ENCODE measurements at regions of chr22 and their contacts with region 1.

Region 1: DNA sequence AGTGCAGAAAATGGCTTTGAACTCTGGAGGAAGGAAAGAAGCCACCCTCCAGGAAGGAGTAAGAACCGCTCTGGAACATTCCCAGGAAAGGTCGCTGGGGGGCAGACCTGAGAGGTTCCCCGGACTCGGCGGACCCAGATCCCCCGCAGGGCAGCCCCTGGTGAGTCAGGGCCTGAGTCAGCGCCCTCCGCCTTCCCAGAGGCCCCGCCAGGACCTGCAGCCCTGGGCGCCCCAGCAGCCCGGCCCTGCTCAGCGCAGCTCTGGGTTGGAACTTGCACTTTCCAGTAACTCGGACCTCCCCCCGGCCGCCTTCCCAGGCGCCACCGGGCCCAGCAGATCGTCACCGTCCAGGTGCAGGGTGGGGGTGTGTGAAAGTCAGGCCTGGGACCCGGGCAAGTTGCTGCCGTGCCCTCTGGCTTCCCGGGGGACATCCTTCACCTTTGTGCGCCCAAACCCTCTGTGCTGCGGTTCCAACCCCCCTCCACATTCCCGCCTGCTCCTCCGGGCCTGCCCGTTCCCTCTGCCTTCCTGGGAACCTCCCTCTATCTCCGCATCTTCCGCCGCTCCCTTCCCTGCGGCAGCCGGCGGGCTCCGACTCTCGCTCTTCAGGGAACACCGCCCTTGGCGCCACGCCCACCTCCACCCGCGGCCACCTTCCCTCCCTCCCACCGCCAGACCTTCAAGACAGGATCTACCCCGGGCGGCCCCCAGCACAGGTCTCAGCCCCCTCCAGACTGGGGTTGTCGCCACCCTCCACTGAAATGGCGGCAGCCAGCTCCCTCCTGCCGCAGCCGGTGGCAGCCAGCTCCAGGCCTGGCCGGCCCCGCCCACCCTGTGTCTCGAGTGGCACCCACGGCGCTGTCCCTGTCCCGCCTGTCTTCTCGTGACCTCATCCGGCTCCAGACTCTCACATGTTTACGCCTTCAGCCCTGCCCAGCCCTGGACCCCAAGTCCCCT is 36.8 kb upstream of the WNT7B start:
- DNase-seq: peak; percentile 96
- H3K4me3 ChIP-seq: peak overlapping the region; percentile 64 to 76
- H3K27ac ChIP-seq: peak overlapping the region; percentile 98 to 99
- H3K4me1 ChIP-seq: peaks cover 23 to 47% of the 10 kb centered on the region in 2 experiments
- H3K27me3 ChIP-seq: no peaks in the 10 kb centered on the region
- CTCF ChIP-seq: peak; percentile 72
- EP300 ChIP-seq: peak in 1 of 2 experiments; percentile 87; a peak in 2 of 4 replicates
- RAD21 ChIP-seq: peak; percentile 70

Region 2: GRCh38 chr22:45977003-45977411 is 36.7 kb before region 1 on chr22 and contains the start of gene WNT7B:
- CTCF ChIA-PET with region 1: no interaction called
- POLR2A ChIA-PET with region 1: no interaction called
- DNase-seq: peak; percentile 53
- H3K4me3 ChIP-seq: peak within 1 kb of the TSS; percentile 10 to 43; a peak in 3 of 4 replicates
- H3K27ac ChIP-seq: no peak within 1 kb of the TSS
- H3K4me1 ChIP-seq: peaks cover 0 to 4% of the 10 kb centered on the region in 2 experiments; a peak in 1 of 4 replicates
- H3K27me3 ChIP-seq: peaks cover 51% of the 10 kb centered on the region
- CTCF ChIP-seq: no peak
- EP300 ChIP-seq: no peak
- RAD21 ChIP-seq: no peak
- polyA plus RNA-seq, gene WNT7B: 0.13 TPM in 1 of 2 replicates, not detected in the other

Region 3: GRCh38 chr22:46027192-46028105 is 13.7 kb after region 1 on chr22:
- CTCF ChIA-PET with region 1: interaction called, 11 read pairs
- POLR2A ChIA-PET with region 1: interaction called, 4 read pairs
- DNase-seq: no peak
- H3K4me3 ChIP-seq: no peak overlapping the region
- H3K27ac ChIP-seq: no peak overlapping the region
- H3K4me1 ChIP-seq: no peaks in the 10 kb centered on the region
- H3K27me3 ChIP-seq: no peaks in the 10 kb centered on the region
- CTCF ChIP-seq: no peak
- EP300 ChIP-seq: no peak
- RAD21 ChIP-seq: no peak

Region 4: DNA sequence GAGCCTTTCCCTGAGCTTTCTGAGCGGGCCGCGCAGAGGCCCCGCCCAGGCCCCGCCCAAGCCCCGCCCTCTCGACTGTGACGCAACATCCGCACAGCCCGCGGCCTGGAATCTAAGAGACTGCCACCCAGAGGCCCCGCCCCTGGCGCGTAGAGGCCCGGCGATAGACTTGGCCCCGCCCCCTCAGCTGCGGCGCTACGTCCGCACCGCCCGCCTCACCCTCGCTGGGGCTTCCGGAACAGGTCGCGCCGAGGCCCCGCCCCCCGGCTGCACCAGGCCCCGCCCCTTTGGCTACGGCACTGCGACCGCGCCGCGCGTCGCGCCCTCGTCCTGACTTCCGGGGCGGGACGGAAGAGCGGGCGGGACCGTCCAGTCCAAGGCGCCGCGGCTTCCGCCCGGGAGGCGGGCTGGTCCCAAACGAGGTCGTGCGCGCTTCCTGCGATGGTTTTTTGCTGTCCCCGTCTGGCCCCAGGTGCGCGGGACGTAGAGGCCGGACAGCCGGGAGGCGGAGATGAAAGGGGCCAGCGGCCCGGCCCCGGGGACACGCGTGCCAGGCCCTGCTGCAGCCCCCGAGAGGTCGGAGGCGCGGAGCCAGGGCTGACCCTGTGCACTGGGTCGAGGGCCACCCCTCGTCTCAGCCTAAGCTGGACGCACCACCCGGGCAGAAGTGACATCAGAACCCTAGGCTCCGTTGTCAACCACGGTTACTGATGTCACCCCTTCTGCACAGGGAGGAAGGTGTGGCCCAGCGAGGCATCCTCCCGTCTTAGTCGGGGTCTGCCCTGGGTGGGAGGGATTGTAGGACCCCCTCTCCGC is 22.2 kb after region 1 on chr22:
- CTCF ChIA-PET with region 1: interaction called, 73 read pairs
- POLR2A ChIA-PET with region 1: interaction called, 35 read pairs
- DNase-seq: peak; percentile 100
- H3K4me3 ChIP-seq: peak overlapping the region; percentile 88 to 91
- H3K27ac ChIP-seq: peak overlapping the region; percentile 89 to 95
- H3K4me1 ChIP-seq: peaks cover 0 to 35% of the 10 kb centered on the region in 2 experiments; a peak in 3 of 4 replicates
- H3K27me3 ChIP-seq: no peaks in the 10 kb centered on the region
- CTCF ChIP-seq: no peak
- EP300 ChIP-seq: no peak
- RAD21 ChIP-seq: no peak

Region 5: GRCh38 chr22:46057762-46058420 is 44.2 kb after region 1 on chr22:
- CTCF ChIA-PET with region 1: interaction called, 76 read pairs
- POLR2A ChIA-PET with region 1: interaction called, 20 read pairs
- DNase-seq: peak; percentile 58
- H3K4me3 ChIP-seq: peak overlapping the region; percentile 67 to 68
- H3K27ac ChIP-seq: peak overlapping the region; percentile 94 to 100
- H3K4me1 ChIP-seq: peaks cover 42 to 66% of the 10 kb centered on the region in 2 experiments
- H3K27me3 ChIP-seq: no peaks in the 10 kb centered on the region
- CTCF ChIP-seq: no peak
- EP300 ChIP-seq: no peak
- RAD21 ChIP-seq: no peak

Region 6: GRCh38 chr22:46064228-46064965 is 50.7 kb after region 1 on chr22:
- CTCF ChIA-PET with region 1: interaction called, 76 read pairs
- POLR2A ChIA-PET with region 1: interaction called, 38 read pairs
- DNase-seq: peak; percentile 70
- H3K4me3 ChIP-seq: peak overlapping the region; percentile 38 to 69
- H3K27ac ChIP-seq: peak overlapping the region; percentile 100
- H3K4me1 ChIP-seq: peaks cover 34 to 54% of the 10 kb centered on the region in 2 experiments; a peak in 3 of 4 replicates
- H3K27me3 ChIP-seq: no peaks in the 10 kb centered on the region
- CTCF ChIP-seq: no peak
- EP300 ChIP-seq: no peak
- RAD21 ChIP-seq: no peak

Region 7: GRCh38 chr22:46108564-46109473 is 95.1 kb after region 1 on chr22:
- CTCF ChIA-PET with region 1: interaction called, 102 read pairs
- POLR2A ChIA-PET with region 1: interaction called, 6 read pairs
- DNase-seq: peak; percentile 75
- H3K4me3 ChIP-seq: no peak overlapping the region
- H3K27ac ChIP-seq: peak overlapping the region; percentile 60 to 98
- H3K4me1 ChIP-seq: peaks cover 43 to 92% of the 10 kb centered on the region in 2 experiments
- H3K27me3 ChIP-seq: no peaks in the 10 kb centered on the region
- CTCF ChIP-seq: peak; percentile 17; the same call in 1 of the 2 replicates
- EP300 ChIP-seq: no peak
- RAD21 ChIP-seq: no peak

Region 8: DNA sequence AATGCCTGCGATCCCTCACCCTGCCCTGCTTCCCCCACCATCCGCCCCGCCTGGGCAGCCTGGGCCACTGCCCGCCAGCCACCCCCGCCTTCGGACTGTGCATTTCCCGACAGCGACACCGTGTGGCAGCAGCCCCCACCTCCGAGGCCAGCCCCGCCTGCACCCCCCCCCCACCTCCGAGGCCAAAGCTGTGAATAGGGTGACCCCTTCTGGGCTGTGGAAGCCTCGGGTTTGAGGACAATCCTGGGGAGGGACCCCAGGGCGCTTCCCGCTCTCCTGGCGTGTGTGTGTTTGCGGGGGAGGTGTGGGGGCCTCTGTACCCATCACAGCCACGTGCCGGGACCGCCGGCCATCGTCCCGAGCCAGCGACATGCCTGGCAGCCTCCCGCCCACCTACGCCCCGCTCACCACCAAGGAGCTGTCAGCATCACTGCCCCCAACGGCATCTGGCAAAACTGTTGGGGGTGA is 102.8 kb after region 1 on chr22:
- CTCF ChIA-PET with region 1: interaction called, 102 read pairs
- POLR2A ChIA-PET with region 1: interaction called, 3 read pairs
- DNase-seq: peak; percentile 99
- H3K4me3 ChIP-seq: peak overlapping the region in 1 of 2 experiments; percentile 47; a peak in 1 of 4 replicates
- H3K27ac ChIP-seq: peak overlapping the region; percentile 63 to 70
- H3K4me1 ChIP-seq: peaks cover 0 to 74% of the 10 kb centered on the region in 2 experiments; a peak in 2 of 4 replicates
- H3K27me3 ChIP-seq: no peaks in the 10 kb centered on the region
- CTCF ChIP-seq: peak; percentile 73
- EP300 ChIP-seq: no peak
- RAD21 ChIP-seq: peak; percentile 80

Region 9: GRCh38 chr22:46140989-46141928 is 127.5 kb after region 1 on chr22:
- CTCF ChIA-PET with region 1: no interaction called
- POLR2A ChIA-PET with region 1: no interaction called
- DNase-seq: no peak
- H3K4me3 ChIP-seq: no peak overlapping the region
- H3K27ac ChIP-seq: no peak overlapping the region
- H3K4me1 ChIP-seq: peaks cover 0 to 10% of the 10 kb centered on the region in 2 experiments; a peak in 1 of 4 replicates
- H3K27me3 ChIP-seq: no peaks in the 10 kb centered on the region; the same call in 1 of the 2 replicates
- CTCF ChIP-seq: no peak
- EP300 ChIP-seq: no peak
- RAD21 ChIP-seq: no peak